Natural killer cell (primary cell): ENCODE measurements at regions of chr13 and their contacts with region 1.

Region 1: DNA sequence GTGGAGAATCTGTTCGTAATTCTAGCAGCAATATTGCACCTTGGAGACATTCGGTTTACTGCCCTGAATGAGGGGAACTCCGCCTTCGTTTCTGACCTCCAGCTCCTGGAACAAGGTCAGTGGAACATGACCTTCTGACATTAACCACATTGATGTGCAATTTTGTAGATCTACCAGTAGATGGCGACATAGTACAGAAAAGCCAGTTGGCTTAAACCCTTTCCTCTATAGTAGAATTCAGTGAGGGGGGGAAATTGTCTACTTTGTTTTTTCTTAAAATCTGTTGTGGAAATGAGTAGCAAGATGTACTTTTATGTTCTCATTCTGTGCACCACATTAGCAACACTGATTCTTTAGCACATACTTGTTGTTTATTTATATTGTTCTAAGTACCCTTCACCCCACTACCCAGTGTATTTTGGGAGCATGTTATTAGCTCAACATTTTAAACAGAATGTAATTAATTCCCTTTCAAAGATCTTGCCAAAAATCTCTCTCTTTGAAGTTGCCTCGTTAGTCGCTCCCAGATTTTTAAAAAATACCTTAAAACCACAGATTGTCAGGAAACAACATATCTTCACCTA is 332.2 kb downstream of the MYO16 start:
- DNase-seq: peak in 1 of 2 donors; percentile 64
- ATAC-seq: peak; percentile 70 to 90 (median 73)
- H3K4me3 ChIP-seq: no peak overlapping the region
- H3K4me3 Mint-ChIP-seq: no peak overlapping the region
- H3K27ac ChIP-seq: no peak overlapping the region
- H3K27ac Mint-ChIP-seq: no peak overlapping the region
- H3K4me1 ChIP-seq: no peaks in the 10 kb centered on the region
- H3K4me1 Mint-ChIP-seq: no peaks in the 10 kb centered on the region
- H3K27me3 ChIP-seq: no peaks in the 10 kb centered on the region
- H3K27me3 Mint-ChIP-seq: no peaks in the 10 kb centered on the region
- CTCF ChIP-seq: peak; percentile 96

Region 2: DNA sequence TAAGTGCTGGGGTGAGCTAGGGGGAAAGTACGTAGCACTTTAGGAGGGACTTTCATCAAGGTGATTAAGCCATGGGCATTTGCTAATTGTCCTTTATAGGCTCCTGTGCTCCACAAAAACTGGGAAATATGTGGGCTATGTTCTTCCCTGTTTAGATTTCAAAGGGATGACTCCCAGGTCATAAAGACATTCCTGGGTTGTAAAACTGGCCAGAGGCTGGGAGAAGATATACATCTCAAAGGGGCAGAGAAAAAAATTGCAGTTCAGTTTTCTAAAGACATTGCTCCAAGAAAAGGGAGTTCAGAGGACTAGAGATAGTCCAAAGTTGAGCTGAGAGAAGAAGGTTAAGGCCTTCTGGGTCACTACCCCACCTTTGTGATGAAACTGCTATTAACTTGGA is 127.4 kb before region 1 on chr13:
- intact Hi-C with region 1: no loop called
- DNase-seq: no peak
- ATAC-seq: no peak
- H3K4me3 ChIP-seq: no peak overlapping the region
- H3K4me3 Mint-ChIP-seq: no peak overlapping the region
- H3K27ac ChIP-seq: no peak overlapping the region
- H3K27ac Mint-ChIP-seq: no peak overlapping the region
- H3K4me1 ChIP-seq: no peaks in the 10 kb centered on the region
- H3K4me1 Mint-ChIP-seq: no peaks in the 10 kb centered on the region
- H3K27me3 ChIP-seq: no peaks in the 10 kb centered on the region
- H3K27me3 Mint-ChIP-seq: no peaks in the 10 kb centered on the region
- CTCF ChIP-seq: no peak

Region 3: DNA sequence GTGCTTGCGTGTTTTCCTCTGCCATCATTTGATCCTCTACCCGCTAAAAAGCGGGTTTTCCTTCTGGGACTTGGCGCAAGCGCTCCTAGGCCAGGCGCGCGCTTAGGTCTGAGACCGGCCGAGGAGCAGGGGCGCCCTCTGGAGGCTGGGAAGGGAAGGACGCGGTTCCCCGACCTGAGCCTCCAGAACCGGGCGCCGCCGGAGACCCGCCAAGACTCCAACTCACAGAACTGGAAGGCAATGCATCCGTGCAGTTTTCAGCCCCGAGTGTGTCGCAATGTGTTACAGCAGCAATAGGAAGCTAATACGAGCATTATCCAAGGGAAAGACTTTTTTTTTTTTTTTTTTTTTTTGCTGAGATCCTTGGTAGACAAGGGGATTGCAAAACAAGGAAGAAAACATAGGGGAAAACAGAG is 1154.4 kb after region 1 on chr13:
- intact Hi-C with region 1: loop called (anchors 1 kb)
- DNase-seq: peak; percentile 34 to 51
- ATAC-seq: peak; percentile 38 to 73 (median 73)
- H3K4me3 ChIP-seq: no peak overlapping the region
- H3K4me3 Mint-ChIP-seq: no peak overlapping the region
- H3K27ac ChIP-seq: no peak overlapping the region
- H3K27ac Mint-ChIP-seq: no peak overlapping the region
- H3K4me1 ChIP-seq: peaks cover 3% of the 10 kb centered on the region
- H3K4me1 Mint-ChIP-seq: no peaks in the 10 kb centered on the region
- H3K27me3 ChIP-seq: peaks cover 3% of the 10 kb centered on the region
- H3K27me3 Mint-ChIP-seq: peaks cover 22 to 29% of the 10 kb centered on the region in 2 donors
- CTCF ChIP-seq: peak; percentile 55

Region 4: GRCh38 chr13:110412132-110412914 is 1450.7 kb after region 1 on chr13:
- intact Hi-C with region 1: loop called (anchors 1 kb)
- DNase-seq: peak; percentile 36 to 69
- ATAC-seq: peak; percentile 70 to 84 (median 75)
- H3K4me3 ChIP-seq: no peak overlapping the region
- H3K4me3 Mint-ChIP-seq: no peak overlapping the region
- H3K27ac ChIP-seq: no peak overlapping the region
- H3K27ac Mint-ChIP-seq: no peak overlapping the region
- H3K4me1 ChIP-seq: no peaks in the 10 kb centered on the region
- H3K4me1 Mint-ChIP-seq: no peaks in the 10 kb centered on the region
- H3K27me3 ChIP-seq: no peaks in the 10 kb centered on the region
- H3K27me3 Mint-ChIP-seq: peaks cover 21 to 51% of the 10 kb centered on the region in 2 donors
- CTCF ChIP-seq: peak; percentile 68